WTC11 (cell line): ENCODE measurements at regions of chr12 and their contacts with region 1.

Region 1: GRCh38 chr12:56839915-56840325 is 76.8 kb downstream of the HSD17B6 start:
- DNase-seq: peak; percentile 78
- ATAC-seq: peak; percentile 91
- H3K4me3 Mint-ChIP-seq: no peak overlapping the region
- H3K27ac Mint-ChIP-seq: no peak overlapping the region
- H3K4me1 Mint-ChIP-seq: no peaks in the 10 kb centered on the region
- H3K27me3 Mint-ChIP-seq: peaks cover 12% of the 10 kb centered on the region
- CTCF ChIP-seq: peak; percentile 22; the same call in 1 of the 2 replicates

Region 2: DNA sequence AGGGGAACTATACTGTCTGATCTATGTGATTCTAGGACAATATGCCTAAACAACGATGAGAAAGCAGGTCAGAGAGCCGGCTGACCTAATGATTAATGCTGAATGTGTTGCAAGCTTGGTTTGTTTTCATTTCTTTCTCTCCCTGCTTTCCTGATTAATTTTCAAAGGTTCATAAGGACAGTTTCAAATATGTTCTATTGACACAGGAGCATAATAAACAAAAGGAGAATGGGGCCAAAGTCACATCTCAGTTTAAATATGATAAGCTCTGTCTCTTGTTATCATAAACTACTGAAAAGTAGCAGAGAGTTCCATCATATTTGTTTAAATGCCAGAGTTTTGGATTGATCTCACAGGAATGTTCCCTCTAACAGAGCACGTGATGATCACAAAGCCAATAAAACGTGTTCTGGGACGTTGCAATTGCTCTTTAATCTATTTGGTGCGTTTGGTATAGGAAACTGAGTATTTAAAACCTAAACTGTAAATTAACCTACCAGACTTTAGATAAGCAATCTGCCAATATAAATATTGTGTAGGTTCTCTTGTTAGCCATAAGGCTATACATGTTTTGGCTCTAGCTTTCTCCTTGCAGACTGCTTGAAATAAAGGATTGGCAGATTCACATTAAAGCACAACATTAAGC is 80.5 kb before region 1 on chr12:
- CTCF ChIA-PET with region 1: interaction called, 12 read pairs
- POLR2A ChIA-PET with region 1: no interaction called
- DNase-seq: no peak
- ATAC-seq: no peak
- H3K4me3 Mint-ChIP-seq: no peak overlapping the region
- H3K27ac Mint-ChIP-seq: no peak overlapping the region
- H3K4me1 Mint-ChIP-seq: peaks cover 4% of the 10 kb centered on the region
- H3K27me3 Mint-ChIP-seq: peaks cover 5% of the 10 kb centered on the region
- CTCF ChIP-seq: no peak

Region 3: GRCh38 chr12:56816491-56816890 is 23.4 kb before region 1 on chr12:
- CTCF ChIA-PET with region 1: no interaction called
- POLR2A ChIA-PET with region 1: no interaction called
- DNase-seq: no peak
- ATAC-seq: no peak
- H3K4me3 Mint-ChIP-seq: no peak overlapping the region
- H3K27ac Mint-ChIP-seq: no peak overlapping the region
- H3K4me1 Mint-ChIP-seq: peaks cover 10% of the 10 kb centered on the region
- H3K27me3 Mint-ChIP-seq: peaks cover 5% of the 10 kb centered on the region
- CTCF ChIP-seq: no peak

Region 4: GRCh38 chr12:56993346-56993745 is 153.4 kb after region 1 on chr12:
- CTCF ChIA-PET with region 1: interaction called, 64 read pairs
- POLR2A ChIA-PET with region 1: no interaction called
- DNase-seq: no peak
- ATAC-seq: no peak
- H3K4me3 Mint-ChIP-seq: no peak overlapping the region
- H3K27ac Mint-ChIP-seq: no peak overlapping the region
- H3K4me1 Mint-ChIP-seq: peaks cover 16% of the 10 kb centered on the region
- H3K27me3 Mint-ChIP-seq: no peaks in the 10 kb centered on the region
- CTCF ChIP-seq: no peak